HCT116 (cell line): ENCODE measurements at regions of chr16 and their contacts with region 1.

Region 1: DNA sequence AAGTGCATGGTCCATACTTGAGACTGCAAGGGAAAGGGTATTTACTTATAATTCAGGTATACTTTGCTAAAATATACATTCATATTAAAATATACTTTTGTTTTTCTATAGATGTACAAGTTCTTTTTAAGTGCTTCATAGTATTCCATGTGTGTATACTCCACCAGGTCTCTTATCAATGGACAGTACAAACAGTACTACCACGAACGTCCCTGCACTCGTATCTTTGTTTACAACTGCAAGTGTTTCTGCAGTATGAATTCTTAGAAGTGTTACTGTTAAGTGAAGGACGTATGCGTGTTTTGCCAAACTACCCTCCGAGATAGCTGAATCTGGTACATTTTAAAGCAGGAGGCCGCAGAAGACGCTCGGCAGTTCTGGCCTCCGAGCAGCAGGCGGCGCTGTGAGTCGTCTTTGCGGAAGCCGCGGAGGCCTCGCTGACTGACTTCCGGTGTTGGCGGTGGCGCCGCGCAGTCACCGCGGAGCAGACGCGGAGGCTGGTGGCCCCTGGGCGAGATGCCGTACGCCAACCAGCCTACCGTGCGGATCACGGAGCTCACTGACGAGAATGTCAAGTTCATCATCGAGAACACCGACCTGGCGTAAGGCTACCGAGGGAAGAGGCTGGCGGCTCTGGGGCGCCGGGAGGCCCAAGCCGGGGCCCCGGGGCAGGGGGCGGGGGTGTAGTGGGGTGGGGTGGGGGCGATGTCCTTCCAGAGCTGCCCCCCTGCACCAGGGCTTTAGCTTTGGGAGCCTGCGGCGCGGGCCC is at the start of gene POLR2C:
- DNase-seq: peak; percentile 72
- ATAC-seq: peak; percentile 94
- H3K4me3 ChIP-seq: peak within 1 kb of the TSS; percentile 82 to 94
- H3K27ac ChIP-seq: peak within 1 kb of the TSS; percentile 61
- H3K4me1 ChIP-seq: peaks cover 8 to 10% of the 10 kb centered on the region in 2 experiments; a peak in 3 of 4 replicates
- H3K27me3 ChIP-seq: no peaks in the 10 kb centered on the region
- CTCF ChIP-seq: peak; percentile 62 to 83 (median 80); a peak in 5 of 6 replicates
- POLR2A ChIP-seq: peak; percentile 92
- RAD21 ChIP-seq: no peak
- total RNA-seq, gene POLR2C: 74.4 TPM

Region 2: GRCh38 chr16:57447186-57447962 is 15.0 kb before region 1 on chr16 and contains the starts of genes CIAPIN1 and COQ9:
- CTCF ChIA-PET with region 1: interaction called, 13 read pairs
- POLR2A ChIA-PET with region 1: interaction called, 10 read pairs
- RAD21 ChIA-PET with region 1: no interaction called
- intact Hi-C with region 1: no loop called
- DNase-seq: peak; percentile 79
- ATAC-seq: peak; percentile 98
- H3K4me3 ChIP-seq: peak within 1 kb of the TSS; percentile 57 to 96
- H3K27ac ChIP-seq: peak within 1 kb of the TSS; percentile 82
- H3K4me1 ChIP-seq: peaks cover 10 to 19% of the 10 kb centered on the region in 2 experiments
- H3K27me3 ChIP-seq: no peaks in the 10 kb centered on the region
- CTCF ChIP-seq: no peak
- POLR2A ChIP-seq: no peak
- RAD21 ChIP-seq: no peak
- total RNA-seq, gene CIAPIN1: 68.5 TPM
- total RNA-seq, gene COQ9: 62.7 TPM

Region 3: GRCh38 chr16:57503366-57503765 is 41.0 kb after region 1 on chr16:
- CTCF ChIA-PET with region 1: no interaction called
- POLR2A ChIA-PET with region 1: no interaction called
- RAD21 ChIA-PET with region 1: no interaction called
- intact Hi-C with region 1: no loop called
- DNase-seq: no peak
- ATAC-seq: no peak
- H3K4me3 ChIP-seq: no peak overlapping the region
- H3K27ac ChIP-seq: no peak overlapping the region
- H3K4me1 ChIP-seq: no peaks in the 10 kb centered on the region
- H3K27me3 ChIP-seq: no peaks in the 10 kb centered on the region
- CTCF ChIP-seq: no peak
- POLR2A ChIP-seq: no peak
- RAD21 ChIP-seq: no peak